PC-3 (cell line): ENCODE measurements at regions of chr9 and their contacts with region 1.

Region 1: GRCh38 chr9:96654443-96655197 is 497 bp downstream of the PRXL2C start:
- DNase-seq: peak; percentile 55
- ATAC-seq: peak; percentile 71
- H3K4me3 ChIP-seq: peak overlapping the region; percentile 85
- H3K27ac ChIP-seq: peak overlapping the region; percentile 86
- H3K4me1 ChIP-seq: peaks cover 17% of the 10 kb centered on the region; the same call in 1 of the 2 replicates
- H3K27me3 ChIP-seq: no peaks in the 10 kb centered on the region
- CTCF ChIP-seq: no peak

Region 2: DNA sequence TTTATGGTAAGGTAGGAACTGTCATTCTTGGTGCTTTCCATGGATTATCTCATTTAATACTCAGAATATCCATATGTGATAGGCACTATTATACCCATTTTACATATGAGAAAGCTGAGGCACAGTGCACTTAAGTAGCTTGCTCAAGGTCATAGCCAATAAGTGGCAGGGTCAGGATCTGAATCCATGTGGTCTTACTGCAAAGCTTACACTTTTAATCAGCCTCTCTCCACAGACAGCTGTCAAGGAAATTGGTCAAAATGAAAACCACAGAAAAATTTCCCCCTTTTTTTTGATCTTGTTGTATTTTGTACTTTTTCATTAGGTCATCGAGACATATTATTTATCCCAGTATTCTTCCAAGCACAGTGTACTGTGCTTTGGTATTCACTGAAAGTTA is 700.6 kb before region 1 on chr9:
- CTCF ChIA-PET with region 1: no interaction called
- POLR2A ChIA-PET with region 1: no interaction called
- intact Hi-C with region 1: no loop called
- DNase-seq: no peak
- ATAC-seq: no peak
- H3K4me3 ChIP-seq: no peak overlapping the region
- H3K27ac ChIP-seq: no peak overlapping the region
- H3K4me1 ChIP-seq: no peaks in the 10 kb centered on the region
- H3K27me3 ChIP-seq: no peaks in the 10 kb centered on the region
- CTCF ChIP-seq: no peak

Region 3: GRCh38 chr9:96327694-96328352 is 326.8 kb before region 1 on chr9:
- CTCF ChIA-PET with region 1: no interaction called
- POLR2A ChIA-PET with region 1: no interaction called
- intact Hi-C with region 1: loop called (anchors 5 kb)
- DNase-seq: peak; percentile 80
- ATAC-seq: peak; percentile 61
- H3K4me3 ChIP-seq: no peak overlapping the region
- H3K27ac ChIP-seq: no peak overlapping the region
- H3K4me1 ChIP-seq: peaks cover 16% of the 10 kb centered on the region
- H3K27me3 ChIP-seq: no peaks in the 10 kb centered on the region
- CTCF ChIP-seq: peak; percentile 69

Region 4: GRCh38 chr9:96449845-96450612 is 204.6 kb before region 1 on chr9 and contains the start of gene HABP4:
- CTCF ChIA-PET with region 1: no interaction called
- POLR2A ChIA-PET with region 1: interaction called, 8 read pairs
- intact Hi-C with region 1: loop called (anchors 1 kb)
- DNase-seq: peak; percentile 91
- ATAC-seq: peak; percentile 93
- H3K4me3 ChIP-seq: peak within 1 kb of the TSS; percentile 77
- H3K27ac ChIP-seq: no peak within 1 kb of the TSS
- H3K4me1 ChIP-seq: peaks cover 18% of the 10 kb centered on the region
- H3K27me3 ChIP-seq: no peaks in the 10 kb centered on the region
- CTCF ChIP-seq: no peak
- total RNA-seq, gene HABP4: 6.6 and 9.2 TPM in 2 replicates

Region 5: DNA sequence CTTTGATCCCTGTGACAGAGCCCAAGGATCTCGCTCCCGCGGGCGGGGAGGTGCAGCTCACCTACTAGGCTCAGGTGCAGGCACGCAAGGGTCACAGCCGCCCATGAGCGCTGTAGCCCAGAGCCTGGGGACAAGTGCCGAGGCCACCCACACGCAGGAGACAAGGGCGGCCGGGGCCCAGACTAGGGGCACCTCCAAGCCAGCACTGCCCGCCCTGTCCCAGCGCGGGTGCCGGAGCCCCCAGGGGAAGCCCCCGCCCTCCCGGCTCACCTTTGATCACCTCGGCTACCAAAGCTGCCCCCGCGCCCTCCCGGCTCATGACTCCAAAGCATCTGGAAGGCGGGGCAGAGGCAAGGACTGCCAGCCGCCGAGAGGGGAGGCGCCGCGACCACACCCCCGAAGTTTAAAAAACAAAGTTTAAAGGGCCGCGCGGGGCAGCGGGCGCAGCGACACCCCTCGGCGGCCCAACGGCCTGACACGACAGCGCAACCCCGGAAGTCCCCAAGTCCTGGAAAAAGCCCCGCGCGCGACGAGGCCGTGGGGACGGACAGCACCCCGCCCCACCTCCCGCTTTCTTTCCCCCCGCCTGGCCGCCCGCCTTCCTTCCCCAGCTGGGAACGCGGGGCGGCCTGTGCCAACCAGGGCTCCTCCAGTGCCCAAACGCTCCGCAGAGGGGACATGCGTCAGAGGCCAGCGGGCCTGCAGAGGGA is 88.0 kb before region 1 on chr9:
- CTCF ChIA-PET with region 1: no interaction called
- POLR2A ChIA-PET with region 1: no interaction called
- intact Hi-C with region 1: loop called (anchors 2 kb)
- DNase-seq: peak; percentile 71
- ATAC-seq: peak; percentile 79
- H3K4me3 ChIP-seq: peak overlapping the region; percentile 85
- H3K27ac ChIP-seq: peak overlapping the region; percentile 53
- H3K4me1 ChIP-seq: peaks cover 17% of the 10 kb centered on the region
- H3K27me3 ChIP-seq: no peaks in the 10 kb centered on the region
- CTCF ChIP-seq: peak; percentile 55; the same call in 1 of the 2 replicates

Region 6: GRCh38 chr9:96619491-96620154 is 35.0 kb before region 1 on chr9 and contains the start of gene CDC14B:
- CTCF ChIA-PET with region 1: no interaction called
- POLR2A ChIA-PET with region 1: no interaction called
- intact Hi-C with region 1: loop called (anchors 1 kb)
- DNase-seq: peak; percentile 86
- ATAC-seq: peak; percentile 77
- H3K4me3 ChIP-seq: peak within 1 kb of the TSS; percentile 74
- H3K27ac ChIP-seq: peak within 1 kb of the TSS; percentile 32
- H3K4me1 ChIP-seq: peaks cover 23% of the 10 kb centered on the region
- H3K27me3 ChIP-seq: no peaks in the 10 kb centered on the region
- CTCF ChIP-seq: no peak
- total RNA-seq, gene CDC14B: 10.5 and 11.4 TPM in 2 replicates